Right lobe of liver (tissue), 6 donors: ENCODE measurements at regions of chr1 and their contacts with region 1.

Region 1: DNA sequence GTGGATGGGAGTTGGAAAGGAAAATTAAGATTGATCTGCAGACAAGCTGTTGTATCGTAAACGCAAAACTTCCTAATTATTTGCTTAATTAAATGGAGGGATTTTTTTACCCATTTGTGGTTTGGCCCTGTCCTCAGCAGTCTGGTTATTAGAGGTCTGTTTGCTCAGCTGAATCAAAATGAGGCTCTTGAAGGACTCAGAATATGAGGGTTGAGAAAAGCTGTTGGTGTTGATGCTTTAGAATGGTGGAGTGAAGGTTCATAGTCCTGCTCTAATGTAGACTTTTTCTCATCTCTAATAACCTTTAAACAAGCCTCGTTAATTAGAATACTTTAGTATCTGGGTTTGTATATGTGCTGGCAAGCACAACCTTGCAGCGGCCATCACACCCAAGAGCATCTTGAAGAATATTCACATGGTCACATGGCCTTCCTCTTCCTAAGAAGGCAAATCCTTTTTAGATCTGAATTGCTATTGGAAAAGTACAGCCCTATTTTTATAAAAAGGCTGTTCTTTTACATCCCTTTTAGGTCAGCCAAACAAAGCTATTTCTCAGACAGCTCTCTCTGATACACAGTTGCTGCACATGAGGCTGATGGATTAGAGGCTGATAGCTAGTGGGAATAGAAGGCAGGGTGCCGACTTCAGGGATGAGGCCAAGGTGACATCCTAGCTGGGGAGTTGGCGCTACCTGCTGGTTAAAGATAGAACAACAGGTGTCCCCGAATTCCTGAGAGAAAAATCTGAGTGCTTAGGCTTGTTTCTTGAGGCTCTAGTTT is 53.8 kb downstream of the MACF1 start:
- DNase-seq: peak in 2 of 3 donors; percentile 39 to 69
- ATAC-seq: peak; percentile 92 to 96 (median 95)
- H3K4me3 ChIP-seq: no peak overlapping the region
- H3K27ac ChIP-seq: no peak overlapping the region
- H3K4me1 ChIP-seq: no peaks in the 10 kb centered on the region
- H3K27me3 ChIP-seq: no peaks in the 10 kb centered on the region
- CTCF ChIP-seq: peak; percentile 80 to 92 (median 84)
- POLR2A ChIP-seq: no peak

Region 2: DNA sequence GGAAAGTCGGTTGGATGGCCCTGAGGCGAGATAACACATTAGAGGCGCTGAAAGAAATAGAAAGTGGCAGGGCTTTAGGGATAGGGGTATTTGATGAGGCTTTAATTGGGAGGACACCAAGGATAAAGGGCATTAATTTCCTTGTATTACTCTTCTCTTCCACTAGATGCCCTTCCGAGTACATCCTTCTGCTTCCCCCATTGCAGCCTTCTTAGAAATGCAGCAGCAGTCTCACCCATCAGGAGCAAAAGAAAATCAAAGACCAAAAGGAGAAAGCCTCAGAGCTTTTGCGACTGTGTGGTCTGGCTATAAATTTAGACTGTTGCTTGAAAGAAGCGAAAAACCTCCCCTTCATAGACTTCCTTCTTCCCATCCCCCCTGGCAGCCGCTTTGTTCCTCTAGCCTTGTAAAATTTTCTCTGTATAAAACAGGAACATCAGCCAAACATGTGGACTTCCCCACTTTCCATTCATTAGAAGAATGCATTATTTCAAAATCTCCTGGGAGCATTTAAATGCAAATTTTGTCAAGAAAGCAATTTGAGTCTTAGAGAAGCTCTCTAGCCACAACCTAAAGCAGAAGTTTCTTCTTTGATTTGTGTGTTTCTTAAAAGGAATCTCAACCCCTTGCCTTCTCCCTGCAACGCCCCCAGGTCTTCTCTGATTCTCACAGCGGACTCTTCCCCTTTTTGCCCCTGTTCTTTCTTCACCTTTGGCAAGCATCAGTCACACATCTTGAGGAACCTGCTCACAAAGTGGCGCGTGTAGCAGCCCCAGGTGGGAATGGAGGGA is 155.6 kb before region 1 on chr1:
- intact Hi-C with region 1: loop called in 1 of 2 experiments (anchors 10 kb)
- DNase-seq: no peak
- ATAC-seq: peak; percentile 41 to 61 (median 52)
- H3K4me3 ChIP-seq: no peak overlapping the region
- H3K27ac ChIP-seq: no peak overlapping the region
- H3K4me1 ChIP-seq: peaks cover 0 to 28% (median 7%) of the 10 kb centered on the region in 4 donors
- H3K27me3 ChIP-seq: no peaks in the 10 kb centered on the region
- CTCF ChIP-seq: peak; percentile 62 to 90 (median 68)
- POLR2A ChIP-seq: no peak

Region 3: GRCh38 chr1:39196244-39197215 is 61.8 kb before region 1 on chr1:
- intact Hi-C with region 1: loop called (anchors 10 kb)
- DNase-seq: no peak
- ATAC-seq: peak in 3 of 4 donors; percentile 7 to 40 (median 37)
- H3K4me3 ChIP-seq: no peak overlapping the region
- H3K27ac ChIP-seq: peak overlapping the region in 2 of 3 donors; percentile 16 to 29
- H3K4me1 ChIP-seq: peaks cover 0 to 55% (median 20%) of the 10 kb centered on the region in 4 donors
- H3K27me3 ChIP-seq: no peaks in the 10 kb centered on the region
- CTCF ChIP-seq: no peak
- POLR2A ChIP-seq: no peak

Region 4: DNA sequence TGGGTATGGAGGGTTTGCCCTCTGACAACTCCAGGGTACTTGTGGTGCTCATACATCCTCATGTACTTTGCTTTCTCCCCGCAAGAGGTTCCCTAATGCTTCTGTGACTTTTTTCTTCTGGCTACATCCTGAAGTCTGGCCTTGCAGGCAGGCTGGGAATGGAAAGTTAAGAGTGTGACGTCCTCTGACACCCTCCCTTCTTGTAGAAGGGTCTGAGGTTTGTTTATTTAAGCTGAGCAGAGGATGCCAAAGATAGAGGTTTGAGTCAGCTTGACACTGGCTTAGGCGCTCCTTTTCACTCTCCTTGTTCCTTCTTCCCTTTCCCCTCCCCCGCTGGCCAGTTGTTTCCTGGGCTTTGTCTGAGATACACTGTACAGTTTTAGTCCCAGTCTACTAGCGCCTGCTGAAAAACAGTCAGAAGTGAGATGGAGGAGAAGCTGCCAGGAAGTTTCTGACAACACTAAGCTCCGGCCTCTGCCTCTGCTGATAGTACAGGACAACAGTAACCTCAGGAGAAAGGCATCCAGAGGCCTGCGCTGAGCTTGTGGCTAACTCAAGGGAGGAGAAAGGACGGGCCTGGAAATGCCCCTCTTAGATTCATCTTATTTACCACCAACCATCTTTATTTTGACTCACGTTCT is 53.8 kb before region 1 on chr1 and contains the start of gene MACF1:
- intact Hi-C with region 1: loop called (anchors 10 kb)
- DNase-seq: peak in 1 of 3 donors; percentile 50
- ATAC-seq: peak; percentile 56 to 83 (median 64)
- H3K4me3 ChIP-seq: peak within 1 kb of the TSS in 2 of 3 donors; percentile 0 to 10
- H3K27ac ChIP-seq: peak within 1 kb of the TSS; percentile 14 to 81 (median 64)
- H3K4me1 ChIP-seq: peaks cover 0 to 24% (median 11%) of the 10 kb centered on the region in 4 donors
- H3K27me3 ChIP-seq: no peaks in the 10 kb centered on the region
- CTCF ChIP-seq: peak in 3 of 4 donors; percentile 5 to 11 (median 11)
- POLR2A ChIP-seq: no peak
- total RNA-seq, gene MACF1: 78.4 to 141 (median 100) TPM